Left lung (tissue), 14 donors: ENCODE measurements at regions of chr7 and their contacts with region 1.

Region 1: GRCh38 chr7:46352004-46352954 is 431.2 kb upstream of the IGFBP3 start:
- DNase-seq: peak in 1 of 4 donors; percentile 51
- ATAC-seq: peak; percentile 81
- H3K4me3 ChIP-seq: no peak overlapping the region
- H3K27ac ChIP-seq: no peak overlapping the region
- H3K4me1 ChIP-seq: no peaks in the 10 kb centered on the region
- H3K27me3 ChIP-seq: no peaks in the 10 kb centered on the region
- CTCF ChIP-seq: peak; percentile 35 to 38

Region 2: GRCh38 chr7:45872116-45873034 is 479.9 kb before region 1 on chr7:
- intact Hi-C with region 1: no loop called
- DNase-seq: no peak
- ATAC-seq: peak; percentile 29
- H3K4me3 ChIP-seq: no peak overlapping the region
- H3K27ac ChIP-seq: no peak overlapping the region
- H3K4me1 ChIP-seq: no peaks in the 10 kb centered on the region
- H3K27me3 ChIP-seq: no peaks in the 10 kb centered on the region
- CTCF ChIP-seq: no peak

Region 3: GRCh38 chr7:45923290-45923689 is 429.0 kb before region 1 on chr7:
- intact Hi-C with region 1: loop called in 1 of 2 experiments (anchors 10 kb)
- DNase-seq: peak; percentile 73 to 87 (median 80)
- ATAC-seq: peak; percentile 76
- H3K4me3 ChIP-seq: no peak overlapping the region
- H3K27ac ChIP-seq: no peak overlapping the region
- H3K4me1 ChIP-seq: peaks cover 8 to 32% of the 10 kb centered on the region in 2 donors
- H3K27me3 ChIP-seq: peaks cover 32 to 64% of the 10 kb centered on the region in 2 donors
- CTCF ChIP-seq: peak; percentile 67 to 86